ENCODE measurements at regions of chr2 and their contacts with region 1.

Region 1: DNA sequence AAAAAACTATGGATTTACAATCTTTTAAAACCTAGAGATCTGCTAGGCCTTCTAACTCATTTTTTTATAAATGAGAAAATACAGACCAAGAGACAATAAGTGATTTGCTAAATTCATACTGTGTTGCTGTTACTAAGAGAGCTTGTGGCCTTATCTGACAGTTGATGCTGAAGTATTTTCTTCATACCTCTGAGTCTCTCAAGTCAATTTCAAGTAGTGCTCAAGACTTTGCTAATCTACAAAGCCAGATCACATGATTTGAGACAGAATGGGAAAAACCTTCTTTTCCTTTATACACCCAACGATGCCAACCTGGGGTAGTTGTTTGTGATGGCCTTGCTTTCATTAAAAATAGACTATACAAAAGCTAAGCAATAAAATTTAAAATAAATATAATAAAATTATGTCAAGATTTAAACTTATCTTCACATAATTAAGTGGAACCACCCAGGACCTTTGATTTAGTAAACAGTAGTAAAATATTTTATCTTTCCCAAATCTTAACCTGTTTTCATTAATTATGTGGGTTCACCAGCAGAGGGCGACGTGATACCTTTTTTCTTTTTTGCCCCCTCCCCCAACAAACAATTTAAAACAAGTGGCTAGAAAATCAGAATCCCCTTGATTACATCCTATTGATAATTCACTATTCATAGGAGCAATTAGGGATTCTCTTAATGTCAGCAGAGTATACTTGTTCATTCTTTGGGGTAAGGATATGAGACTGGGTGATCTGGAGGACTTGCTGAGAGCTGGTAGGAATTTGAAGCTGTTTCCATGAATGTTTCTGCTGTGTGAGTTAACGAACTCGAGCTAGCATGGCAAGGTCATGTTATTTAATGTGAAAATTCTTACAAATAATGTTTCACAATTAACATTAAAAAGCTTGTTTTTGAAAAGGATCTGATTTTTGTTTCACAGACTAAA is 49.6 kb upstream of the SLC5A7 start:
- DNase-seq: peak; percentile 28 to 37 (median 30)
- ATAC-seq: no peak
- H3K4me3 ChIP-seq: no peak overlapping the region
- H3K27ac ChIP-seq: no peak overlapping the region
- H3K4me1 ChIP-seq: no peaks in the 10 kb centered on the region
- H3K27me3 ChIP-seq: no peaks in the 10 kb centered on the region; a peak in 1 of 5 replicates
- CTCF ChIP-seq: peak; percentile 31 to 65 (median 46); a peak in 3 of 6 replicates
- EP300 ChIP-seq: no peak
- POLR2A ChIP-seq: no peak
- RAD21 ChIP-seq: peak; percentile 27 to 58; a peak in 3 of 4 replicates

Region 2: GRCh38 chr2:108182489-108182888 is 245.8 kb after region 1 on chr2:
- CTCF ChIA-PET with region 1: no interaction called
- POLR2A ChIA-PET with region 1: no interaction called
- in situ Hi-C with region 1: no loop called
- intact Hi-C with region 1: loop called (anchors 2 kb)
- DNase-seq: peak; percentile 8 to 52 (median 14)
- ATAC-seq: peak; percentile 90
- H3K4me3 ChIP-seq: no peak overlapping the region
- H3K27ac ChIP-seq: no peak overlapping the region
- H3K4me1 ChIP-seq: no peaks in the 10 kb centered on the region; a peak in 1 of 5 replicates
- H3K27me3 ChIP-seq: no peaks in the 10 kb centered on the region
- CTCF ChIP-seq: peak; percentile 52 to 56 (median 55); a peak in 5 of 6 replicates
- EP300 ChIP-seq: no peak
- POLR2A ChIP-seq: no peak
- RAD21 ChIP-seq: peak in 1 of 2 experiments; percentile 60; a peak in 2 of 4 replicates

Region 3: DNA sequence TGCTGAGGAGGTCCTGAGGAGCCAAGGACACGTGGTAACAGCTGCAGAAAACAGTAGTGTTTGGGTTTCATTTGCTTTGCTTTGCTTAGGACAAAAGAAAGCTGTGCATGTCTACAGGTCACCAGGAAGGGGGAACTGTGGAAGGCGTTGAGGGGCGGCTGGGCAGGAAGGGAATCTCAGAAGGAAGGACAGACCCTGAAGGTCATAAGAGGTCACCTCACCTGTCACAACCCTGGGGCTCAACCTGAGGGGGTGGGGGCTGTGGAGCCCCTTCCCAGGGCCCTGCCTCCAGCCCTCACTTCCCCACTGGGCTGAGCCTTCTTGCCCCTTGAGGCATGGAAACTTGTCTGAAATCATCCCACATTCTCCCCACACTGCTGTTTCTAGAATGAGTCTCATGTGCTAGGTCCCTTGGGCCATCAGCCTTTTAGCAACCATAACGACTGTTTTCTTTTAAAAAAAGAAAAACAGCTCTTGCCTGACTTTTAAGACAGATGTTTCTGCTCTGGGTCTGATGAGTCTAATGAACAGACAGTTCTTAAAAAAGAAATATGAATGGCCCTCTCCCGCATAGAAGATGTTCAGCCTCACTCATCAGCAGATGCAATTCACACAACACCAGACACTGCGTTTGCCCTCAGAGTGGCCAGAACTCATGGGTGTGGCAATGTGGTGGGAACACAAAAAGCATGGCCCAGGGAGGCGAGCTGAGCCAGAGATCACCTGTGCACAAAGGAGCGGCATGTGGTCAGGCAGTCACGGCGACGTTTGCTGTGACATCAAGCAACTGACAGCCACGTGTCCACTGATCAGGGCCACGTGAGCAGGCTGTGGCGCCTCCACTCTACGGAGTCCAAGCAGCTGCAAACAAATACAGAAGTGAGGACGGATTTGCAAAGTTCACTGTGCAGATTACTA is 1593.1 kb after region 1 on chr2:
- CTCF ChIA-PET with region 1: no interaction called
- POLR2A ChIA-PET with region 1: no interaction called
- in situ Hi-C with region 1: no loop called
- intact Hi-C with region 1: no loop called
- DNase-seq: no peak
- ATAC-seq: no peak
- H3K4me3 ChIP-seq: no peak overlapping the region
- H3K27ac ChIP-seq: no peak overlapping the region
- H3K4me1 ChIP-seq: no peaks in the 10 kb centered on the region
- H3K27me3 ChIP-seq: peaks cover 0 to 58% of the 10 kb centered on the region in 2 experiments; a peak in 3 of 5 replicates
- CTCF ChIP-seq: no peak
- EP300 ChIP-seq: no peak
- POLR2A ChIP-seq: no peak
- RAD21 ChIP-seq: no peak

Measured in K562 (cell line).